Cardiac septum (tissue), 1 donor: ENCODE measurements at regions of chr9 and their contacts with region 1.

Region 1: GRCh38 chr9:3436629-3437420 is 89.0 kb downstream of the RFX3 start:
- DNase-seq: no peak

Region 2: DNA sequence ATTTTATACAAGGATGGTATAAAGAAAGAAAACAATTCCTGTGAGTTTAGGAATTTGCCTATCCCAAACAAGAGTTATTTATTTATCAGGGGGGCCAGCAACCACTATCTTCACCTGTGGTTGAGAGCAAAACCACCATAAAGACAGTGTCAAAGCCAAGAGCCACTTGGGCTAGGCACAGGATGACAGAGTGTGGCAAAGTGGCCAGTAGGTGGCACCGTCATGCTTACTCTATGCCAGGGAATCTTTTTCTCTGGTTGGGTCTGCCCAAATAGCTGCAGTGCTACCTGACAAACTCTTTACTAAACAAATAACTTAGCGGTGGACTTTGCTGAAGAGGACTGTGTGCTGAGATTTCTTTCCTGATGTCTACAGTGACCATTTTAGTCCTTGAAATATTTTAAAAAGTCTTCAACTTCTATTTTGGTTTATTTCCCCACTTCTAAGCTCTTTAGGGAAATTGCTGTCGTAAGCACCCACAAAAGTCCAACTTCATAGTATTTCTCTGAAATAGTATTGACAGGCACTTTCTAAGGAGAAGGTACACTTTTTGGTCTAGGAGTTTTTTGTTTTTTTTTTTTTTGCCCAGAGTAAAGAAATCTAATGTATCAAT is 196.1 kb before region 1 on chr9:
- intact Hi-C with region 1: loop called (anchors 10 kb)
- DNase-seq: no peak